ENCODE measurements at regions of chr1 and their contacts with region 1.

Region 1: GRCh38 chr1:113793878-113794834 is 18.1 kb downstream of the RSBN1 start:
- DNase-seq: no peak
- ATAC-seq: no peak
- H3K4me3 ChIP-seq: no peak overlapping the region
- H3K27ac ChIP-seq: no peak overlapping the region
- H3K4me1 ChIP-seq: peaks cover 4% of the 10 kb centered on the region; the same call in 1 of the 2 replicates
- H3K27me3 ChIP-seq: no peaks in the 10 kb centered on the region
- CTCF ChIP-seq: no peak
- POLR2A ChIP-seq: no peak
- RAD21 ChIP-seq: no peak

Region 2: DNA sequence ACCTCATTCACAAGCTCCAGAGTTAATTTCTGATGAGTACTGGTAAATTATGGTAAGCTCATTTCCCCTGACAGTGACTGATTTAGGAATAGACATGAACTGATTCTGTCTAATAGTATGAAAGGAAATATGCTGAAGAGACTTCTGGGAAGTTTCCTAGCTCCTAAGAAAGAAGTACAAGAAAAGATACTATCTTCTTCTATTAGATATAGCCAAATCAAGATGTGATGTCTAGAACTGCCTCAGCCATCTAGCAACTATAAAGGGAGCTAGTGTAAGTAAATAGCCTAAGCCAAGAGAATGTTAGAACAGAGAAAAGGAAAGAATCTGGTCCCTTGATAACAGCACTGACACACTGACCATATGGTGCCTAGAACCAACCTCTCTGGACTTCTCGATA is 24.1 kb before region 1 on chr1:
- CTCF ChIA-PET with region 1: no interaction called
- POLR2A ChIA-PET with region 1: no interaction called
- dilution Hi-C with region 1: no loop called
- in situ Hi-C with region 1: no loop called
- intact Hi-C with region 1: loop called (anchors 1 kb)
- DNase-seq: no peak
- ATAC-seq: no peak
- H3K4me3 ChIP-seq: no peak overlapping the region
- H3K27ac ChIP-seq: no peak overlapping the region
- H3K4me1 ChIP-seq: no peaks in the 10 kb centered on the region
- H3K27me3 ChIP-seq: no peaks in the 10 kb centered on the region
- CTCF ChIP-seq: no peak
- POLR2A ChIP-seq: no peak
- RAD21 ChIP-seq: no peak